ENCODE measurements at regions of chr4 and their contacts with region 1.

Region 1: GRCh38 chr4:181301735-181302710 is 941.2 kb upstream of the TENM3 start:
- DNase-seq: peak; percentile 35
- H3K4me3 Mint-ChIP-seq: no peak overlapping the region
- H3K27ac Mint-ChIP-seq: no peak overlapping the region
- H3K4me1 Mint-ChIP-seq: no peaks in the 10 kb centered on the region
- H3K27me3 Mint-ChIP-seq: no peaks in the 10 kb centered on the region

Region 2: GRCh38 chr4:181372014-181372413 is 70.0 kb after region 1 on chr4:
- CTCF ChIA-PET with region 1: no interaction called
- intact Hi-C with region 1: no loop called
- DNase-seq: no peak
- H3K4me3 Mint-ChIP-seq: no peak overlapping the region
- H3K27ac Mint-ChIP-seq: no peak overlapping the region
- H3K4me1 Mint-ChIP-seq: no peaks in the 10 kb centered on the region
- H3K27me3 Mint-ChIP-seq: no peaks in the 10 kb centered on the region

Region 3: DNA sequence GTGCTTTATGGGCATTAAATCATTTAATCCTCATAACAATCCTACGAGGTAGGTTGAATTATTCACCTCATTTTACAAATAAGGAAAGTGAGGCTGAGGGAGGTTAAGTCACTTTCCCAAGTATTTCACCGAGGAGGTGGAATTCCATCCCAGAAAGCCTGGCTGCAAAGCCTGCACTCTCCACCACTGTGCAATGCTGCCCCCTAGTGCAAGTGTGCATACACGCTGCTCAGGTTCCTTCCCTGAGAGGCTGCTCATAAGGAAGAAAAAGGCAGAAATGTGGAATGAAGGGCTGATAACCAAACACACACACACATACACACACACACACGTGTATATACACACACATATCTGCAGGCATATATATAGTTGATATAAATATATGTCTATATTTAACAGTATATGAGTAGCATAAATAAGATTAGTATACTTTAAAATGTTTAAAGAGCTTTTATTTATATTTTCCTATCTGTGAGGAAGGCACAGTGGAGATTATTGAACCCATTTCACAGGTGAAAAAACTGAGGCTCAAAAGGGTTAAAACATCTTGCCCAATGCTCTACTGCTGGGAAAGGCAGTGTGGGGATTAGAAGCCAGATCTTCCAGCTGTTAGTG is 226.7 kb after region 1 on chr4:
- CTCF ChIA-PET with region 1: no interaction called
- intact Hi-C with region 1: loop called (anchors 5 kb)
- DNase-seq: peak; percentile 46
- H3K4me3 Mint-ChIP-seq: no peak overlapping the region
- H3K27ac Mint-ChIP-seq: no peak overlapping the region
- H3K4me1 Mint-ChIP-seq: no peaks in the 10 kb centered on the region
- H3K27me3 Mint-ChIP-seq: peaks cover 2% of the 10 kb centered on the region

Region 4: DNA sequence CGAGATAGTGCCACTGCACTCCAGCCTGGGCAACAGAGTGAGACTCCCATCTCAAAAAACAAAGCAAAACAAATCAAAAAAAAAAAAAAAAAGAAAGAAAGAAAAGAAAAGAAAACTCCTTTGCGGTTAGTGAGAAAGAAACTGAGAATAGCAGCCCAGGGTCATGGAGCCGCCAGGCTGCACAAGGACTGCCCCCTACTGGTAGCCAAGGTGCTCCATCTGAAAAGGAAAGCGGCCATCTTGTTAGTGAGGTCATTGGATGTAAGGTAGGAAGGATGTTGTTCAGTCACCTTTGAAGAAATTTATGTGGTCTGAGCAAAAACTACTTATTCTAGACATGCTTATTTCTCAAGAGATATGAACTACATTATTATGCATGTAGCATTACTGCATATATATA is 280.6 kb after region 1 on chr4:
- CTCF ChIA-PET with region 1: no interaction called
- intact Hi-C with region 1: loop called (anchors 5 kb)
- DNase-seq: no peak
- H3K4me3 Mint-ChIP-seq: no peak overlapping the region
- H3K27ac Mint-ChIP-seq: no peak overlapping the region
- H3K4me1 Mint-ChIP-seq: no peaks in the 10 kb centered on the region
- H3K27me3 Mint-ChIP-seq: no peaks in the 10 kb centered on the region

Region 5: GRCh38 chr4:182925298-182925738 is 1623.3 kb after region 1 on chr4:
- CTCF ChIA-PET with region 1: no interaction called
- intact Hi-C with region 1: loop called (anchors 10 kb)
- DNase-seq: peak; percentile 80
- H3K4me3 Mint-ChIP-seq: no peak overlapping the region
- H3K27ac Mint-ChIP-seq: no peak overlapping the region
- H3K4me1 Mint-ChIP-seq: peaks cover 2% of the 10 kb centered on the region
- H3K27me3 Mint-ChIP-seq: peaks cover 4% of the 10 kb centered on the region

Measured in activated naive CD4-positive, alpha-beta T cell treated with anti-CD3 and anti-CD28 coated beads for 36 hours (primary cell).